Endothelial cell of umbilical vein (primary cell): ENCODE measurements at regions of chr3 and their contacts with region 1.

Region 1: DNA sequence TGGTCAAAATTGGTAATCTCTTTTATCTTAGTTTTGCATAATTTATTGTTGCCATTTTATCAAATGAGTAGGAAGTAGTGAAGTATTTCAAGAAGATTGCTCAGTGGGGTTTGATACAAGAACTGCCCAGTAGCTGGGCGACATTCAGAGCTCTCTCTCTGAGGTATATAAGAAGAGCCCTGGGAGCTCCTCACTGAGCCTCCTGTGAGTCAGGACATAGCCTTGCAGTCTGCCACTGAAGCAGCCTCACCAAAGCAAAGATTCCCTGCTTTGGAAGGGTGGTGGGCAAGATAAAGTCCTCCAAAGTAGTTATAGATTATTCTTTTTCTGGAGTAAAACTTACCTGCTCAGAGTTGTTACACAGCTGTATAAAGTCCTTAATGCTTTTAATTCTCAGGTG is 26.1 kb downstream of the SKIL start:
- DNase-seq: no peak
- H3K4me3 ChIP-seq: no peak overlapping the region
- H3K27ac ChIP-seq: no peak overlapping the region
- H3K4me1 ChIP-seq: peaks cover 5% of the 10 kb centered on the region
- H3K27me3 ChIP-seq: no peaks in the 10 kb centered on the region
- CTCF ChIP-seq: no peak
- POLR2A ChIP-seq: no peak

Region 2: DNA sequence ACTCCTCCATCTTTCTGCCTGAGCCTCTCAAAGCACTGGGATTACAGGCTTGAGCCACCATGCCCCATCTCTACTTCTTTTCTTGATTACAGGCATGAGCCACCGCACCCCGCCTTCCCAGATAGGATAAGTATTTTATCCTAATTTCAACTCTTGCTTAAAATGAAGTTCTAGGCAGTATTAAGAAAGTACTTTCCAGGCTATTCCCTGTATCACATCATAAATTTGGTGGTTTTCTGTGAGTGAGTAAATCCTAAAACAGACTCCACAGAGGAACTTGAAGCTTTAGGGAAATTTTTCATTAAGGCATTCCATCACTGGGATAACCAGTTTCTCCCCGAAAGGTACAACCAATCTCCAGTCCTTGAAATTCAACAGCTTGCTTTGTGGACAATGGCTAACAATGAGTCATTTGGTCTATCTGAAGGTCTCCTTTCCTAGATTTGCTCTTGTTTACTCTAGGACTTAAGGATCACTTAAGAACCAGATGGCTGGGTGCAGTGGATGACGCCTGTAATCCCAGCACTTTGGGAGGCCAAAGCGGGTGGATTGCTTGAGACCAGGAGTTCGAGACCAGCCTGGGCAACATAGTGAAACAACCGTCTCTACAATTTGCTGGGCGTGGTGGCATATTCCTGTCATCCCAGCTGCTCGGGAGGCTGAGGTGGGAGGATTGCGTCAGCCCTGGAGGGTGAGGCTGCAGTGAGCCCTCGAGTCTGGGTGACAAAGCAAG is 75.7 kb before region 1 on chr3:
- CTCF ChIA-PET with region 1: interaction called, 10 read pairs
- POLR2A ChIA-PET with region 1: no interaction called
- dilution Hi-C with region 1: no loop called
- intact Hi-C with region 1: no loop called
- DNase-seq: no peak
- H3K4me3 ChIP-seq: no peak overlapping the region
- H3K27ac ChIP-seq: no peak overlapping the region
- H3K4me1 ChIP-seq: peaks cover 7% of the 10 kb centered on the region
- H3K27me3 ChIP-seq: no peaks in the 10 kb centered on the region
- CTCF ChIP-seq: no peak
- POLR2A ChIP-seq: no peak

Region 3: DNA sequence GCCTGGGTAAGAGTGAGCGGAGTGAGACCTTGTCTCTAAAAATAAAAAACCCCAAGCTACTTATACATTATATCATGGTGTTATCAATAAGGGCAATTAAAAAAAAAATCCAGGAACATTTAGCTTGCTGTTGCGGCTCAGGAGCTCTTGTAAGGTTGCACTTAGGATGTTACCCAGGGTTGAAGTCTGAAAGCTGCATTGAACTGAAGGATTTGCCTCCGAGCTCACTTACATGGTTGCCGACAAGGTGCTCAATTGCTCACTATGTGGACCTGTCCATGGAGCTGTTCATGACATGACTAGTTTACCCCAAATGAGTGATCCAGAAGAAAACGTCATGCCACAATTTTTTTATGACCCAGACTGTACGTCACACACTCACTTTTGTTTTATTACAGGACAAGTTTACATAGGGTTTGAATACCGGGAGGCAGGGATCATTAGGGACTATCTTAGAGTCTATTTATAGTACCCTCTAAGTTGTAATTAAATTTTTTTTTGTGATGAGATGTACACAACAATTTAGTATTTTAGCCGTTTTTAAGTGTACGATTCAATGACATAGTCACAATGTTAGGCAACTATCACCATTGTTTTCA is 14.1 kb after region 1 on chr3:
- CTCF ChIA-PET with region 1: interaction called, 10 read pairs
- POLR2A ChIA-PET with region 1: no interaction called
- dilution Hi-C with region 1: no loop called
- intact Hi-C with region 1: no loop called
- DNase-seq: no peak
- H3K4me3 ChIP-seq: no peak overlapping the region
- H3K27ac ChIP-seq: no peak overlapping the region
- H3K4me1 ChIP-seq: no peaks in the 10 kb centered on the region
- H3K27me3 ChIP-seq: no peaks in the 10 kb centered on the region
- CTCF ChIP-seq: no peak
- POLR2A ChIP-seq: peak; percentile 57